Activated CD4-positive, alpha-beta memory T cell treated with anti-CD3 and anti-CD28 coated beads for 36 hours (primary cell): ENCODE measurements at regions of chr5 and their contacts with region 1.

Region 1: GRCh38 chr5:151447174-151448037 is at the start of gene SLC36A1:
- DNase-seq: peak; percentile 97
- H3K4me3 Mint-ChIP-seq: peak within 1 kb of the TSS; percentile 89
- H3K27ac Mint-ChIP-seq: peak within 1 kb of the TSS; percentile 69
- H3K4me1 Mint-ChIP-seq: peaks cover 22% of the 10 kb centered on the region
- H3K27me3 Mint-ChIP-seq: peaks cover 7% of the 10 kb centered on the region
- total RNA-seq, gene SLC36A1: 3.8 to 3.9 TPM

Region 2: GRCh38 chr5:151183451-151184245 is 263.8 kb before region 1 on chr5:
- CTCF ChIA-PET with region 1: no interaction called
- POLR2A ChIA-PET with region 1: no interaction called
- intact Hi-C with region 1: no loop called
- DNase-seq: no peak
- H3K4me3 Mint-ChIP-seq: no peak overlapping the region
- H3K27ac Mint-ChIP-seq: no peak overlapping the region
- H3K4me1 Mint-ChIP-seq: peaks cover 5% of the 10 kb centered on the region
- H3K27me3 Mint-ChIP-seq: no peaks in the 10 kb centered on the region

Region 3: DNA sequence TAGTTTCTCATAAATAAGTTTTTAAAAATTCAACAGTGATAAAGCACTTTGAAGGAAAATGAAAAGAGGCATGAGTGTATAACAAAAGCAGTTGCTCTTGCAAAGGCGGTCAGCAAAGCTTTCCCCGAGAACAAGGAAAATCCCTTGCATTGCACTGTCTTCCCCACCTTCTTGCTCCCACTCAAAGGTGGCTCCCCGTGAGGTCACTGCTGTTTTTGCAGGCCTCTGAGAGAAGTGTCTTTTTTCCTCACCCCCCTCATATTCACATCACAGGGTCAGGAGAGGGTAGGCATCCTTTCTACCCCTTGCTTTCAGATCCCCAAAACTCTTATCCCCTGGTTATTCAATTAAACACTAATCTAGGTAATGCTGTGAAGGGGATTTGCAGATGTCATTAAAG is 15.2 kb before region 1 on chr5:
- CTCF ChIA-PET with region 1: interaction called, 12 read pairs
- POLR2A ChIA-PET with region 1: no interaction called
- intact Hi-C with region 1: no loop called
- DNase-seq: no peak
- H3K4me3 Mint-ChIP-seq: no peak overlapping the region
- H3K27ac Mint-ChIP-seq: no peak overlapping the region
- H3K4me1 Mint-ChIP-seq: no peaks in the 10 kb centered on the region
- H3K27me3 Mint-ChIP-seq: peaks cover 13% of the 10 kb centered on the region

Region 4: GRCh38 chr5:151459680-151460324 is 12.4 kb after region 1 on chr5:
- CTCF ChIA-PET with region 1: interaction called, 18 read pairs
- POLR2A ChIA-PET with region 1: interaction called, 3 read pairs
- intact Hi-C with region 1: no loop called
- DNase-seq: no peak
- H3K4me3 Mint-ChIP-seq: no peak overlapping the region
- H3K27ac Mint-ChIP-seq: no peak overlapping the region
- H3K4me1 Mint-ChIP-seq: no peaks in the 10 kb centered on the region
- H3K27me3 Mint-ChIP-seq: no peaks in the 10 kb centered on the region

Region 5: DNA sequence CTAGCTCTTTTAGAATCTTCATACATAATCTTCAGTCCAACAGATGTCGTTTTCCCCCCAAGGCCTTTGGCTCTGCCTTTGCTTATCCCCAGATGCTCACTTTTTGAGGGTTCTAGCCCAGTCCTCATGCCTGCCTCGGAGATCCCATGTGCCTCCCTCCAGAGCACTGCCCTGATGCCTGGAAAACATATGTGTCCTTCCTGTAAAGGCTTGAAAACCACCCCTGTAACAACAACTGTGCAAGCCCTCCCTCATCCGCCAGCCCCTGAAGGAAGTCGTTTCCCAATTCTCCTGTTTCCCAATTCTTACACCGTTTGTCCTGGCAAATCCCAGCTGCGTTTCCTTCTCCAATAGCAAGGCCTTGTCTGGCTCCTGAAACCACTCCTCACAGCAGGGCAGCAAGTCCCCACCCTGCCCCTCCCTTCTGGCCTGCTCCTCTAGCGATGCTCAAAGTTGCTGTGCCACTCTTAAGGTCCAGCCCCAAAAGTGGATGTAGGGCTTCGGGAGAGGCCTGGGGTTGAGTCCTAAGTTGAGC is 52.2 kb after region 1 on chr5:
- CTCF ChIA-PET with region 1: interaction called, 14 read pairs
- POLR2A ChIA-PET with region 1: no interaction called
- intact Hi-C with region 1: loop called (anchors 1 kb)
- DNase-seq: no peak
- H3K4me3 Mint-ChIP-seq: no peak overlapping the region
- H3K27ac Mint-ChIP-seq: no peak overlapping the region
- H3K4me1 Mint-ChIP-seq: peaks cover 5% of the 10 kb centered on the region
- H3K27me3 Mint-ChIP-seq: no peaks in the 10 kb centered on the region

Region 6: GRCh38 chr5:151523335-151523734 is 75.9 kb after region 1 on chr5:
- CTCF ChIA-PET with region 1: interaction called, 23 read pairs
- POLR2A ChIA-PET with region 1: no interaction called
- intact Hi-C with region 1: loop called (anchors 1 kb)
- DNase-seq: peak; percentile 66
- H3K4me3 Mint-ChIP-seq: no peak overlapping the region
- H3K27ac Mint-ChIP-seq: no peak overlapping the region
- H3K4me1 Mint-ChIP-seq: no peaks in the 10 kb centered on the region
- H3K27me3 Mint-ChIP-seq: no peaks in the 10 kb centered on the region

Region 7: GRCh38 chr5:151569132-151570046 is 122.0 kb after region 1 on chr5:
- CTCF ChIA-PET with region 1: no interaction called
- POLR2A ChIA-PET with region 1: no interaction called
- intact Hi-C with region 1: loop called (anchors 2 kb)
- DNase-seq: peak; percentile 66
- H3K4me3 Mint-ChIP-seq: no peak overlapping the region
- H3K27ac Mint-ChIP-seq: no peak overlapping the region
- H3K4me1 Mint-ChIP-seq: peaks cover 9% of the 10 kb centered on the region
- H3K27me3 Mint-ChIP-seq: peaks cover 15% of the 10 kb centered on the region

Region 8: GRCh38 chr5:151740336-151740942 is 293.0 kb after region 1 on chr5:
- CTCF ChIA-PET with region 1: interaction called, 4 read pairs
- POLR2A ChIA-PET with region 1: no interaction called
- intact Hi-C with region 1: loop called (anchors 5 kb)
- DNase-seq: peak; percentile 55
- H3K4me3 Mint-ChIP-seq: no peak overlapping the region
- H3K27ac Mint-ChIP-seq: no peak overlapping the region
- H3K4me1 Mint-ChIP-seq: peaks cover 23% of the 10 kb centered on the region
- H3K27me3 Mint-ChIP-seq: no peaks in the 10 kb centered on the region